Astrocyte of the cerebellum (primary cell): ENCODE measurements at regions of chr5 and their contacts with region 1.

Region 1: DNA sequence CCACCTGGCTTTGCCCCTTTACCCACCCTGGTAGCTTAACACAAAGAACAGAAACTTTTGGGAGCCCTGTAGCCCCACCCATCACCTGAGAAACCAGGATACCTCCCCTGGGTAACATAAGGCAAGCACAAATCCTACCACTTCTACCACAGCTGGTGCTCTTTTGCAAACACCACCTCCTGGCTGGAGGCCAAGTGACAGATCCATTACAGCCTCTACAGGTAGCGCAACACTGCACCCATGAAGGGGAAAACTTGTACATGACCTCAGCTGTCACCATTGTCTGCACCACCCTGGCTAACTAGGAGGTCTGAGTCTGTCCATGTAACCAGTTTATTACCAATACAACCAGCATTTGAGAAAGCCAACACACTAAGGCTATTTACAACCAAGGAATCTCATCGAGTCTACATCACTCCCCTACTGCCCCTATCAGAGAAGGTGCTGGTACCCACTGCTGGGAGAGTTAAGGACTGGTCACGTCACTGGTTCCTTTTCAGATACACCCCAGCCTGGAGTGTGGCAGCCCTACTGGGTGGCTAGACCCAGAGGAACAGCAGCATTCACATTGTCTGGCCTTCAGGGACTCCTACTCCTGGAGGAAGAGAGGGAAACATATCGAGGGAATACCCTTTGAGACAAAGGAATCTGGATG is 128.5 kb downstream of the PJA2 start:
- DNase-seq: no peak
- H3K4me3 ChIP-seq: no peak overlapping the region
- CTCF ChIP-seq: no peak

Region 2: GRCh38 chr5:108884736-108885135 is 396.5 kb before region 1 on chr5:
- in situ Hi-C with region 1: no loop called
- DNase-seq: peak; percentile 41
- H3K4me3 ChIP-seq: no peak overlapping the region
- CTCF ChIP-seq: no peak

Region 3: DNA sequence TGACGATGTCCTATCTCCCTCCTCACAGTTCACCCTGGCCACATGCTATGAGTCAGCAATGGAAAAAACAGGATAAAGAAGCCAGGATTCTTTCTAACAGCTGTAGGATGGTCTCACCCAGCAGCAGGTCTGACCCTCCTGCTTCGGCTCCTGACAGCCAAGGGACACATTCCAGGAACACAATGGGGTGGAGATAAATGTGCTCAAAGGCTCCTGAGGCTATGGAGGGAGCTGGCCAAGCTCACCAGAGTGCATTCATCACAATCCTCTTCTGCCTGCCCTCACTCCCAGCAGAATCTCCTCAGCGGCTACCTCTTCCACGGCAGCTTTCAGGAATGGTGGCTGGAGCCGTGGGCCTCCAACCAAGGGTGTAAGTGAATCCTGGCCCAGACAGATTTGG is 41.8 kb before region 1 on chr5:
- in situ Hi-C with region 1: loop called (anchors 10 kb)
- DNase-seq: no peak
- H3K4me3 ChIP-seq: no peak overlapping the region
- CTCF ChIP-seq: no peak